Activated B cell treated with CpG ODN at 0.5 μM for 24 hours (primary cell): ENCODE measurements at regions of chr6 and their contacts with region 1.

Region 1: GRCh38 chr6:142857233-142857761 is 87.7 kb downstream of the HIVEP2 start:
- DNase-seq: no peak
- ATAC-seq: peak; percentile 26
- H3K4me3 Mint-ChIP-seq: peak overlapping the region; percentile 73
- H3K27ac Mint-ChIP-seq: peak overlapping the region; percentile 95
- H3K4me1 Mint-ChIP-seq: peaks cover 90% of the 10 kb centered on the region
- H3K27me3 Mint-ChIP-seq: no peaks in the 10 kb centered on the region
- CTCF ChIP-seq: no peak

Region 2: GRCh38 chr6:141077355-141078333 is 1779.7 kb before region 1 on chr6:
- CTCF ChIA-PET with region 1: no interaction called
- POLR2A ChIA-PET with region 1: no interaction called
- intact Hi-C with region 1: no loop called
- DNase-seq: no peak
- ATAC-seq: peak; percentile 42
- H3K4me3 Mint-ChIP-seq: no peak overlapping the region
- H3K27ac Mint-ChIP-seq: no peak overlapping the region
- H3K4me1 Mint-ChIP-seq: no peaks in the 10 kb centered on the region
- H3K27me3 Mint-ChIP-seq: no peaks in the 10 kb centered on the region
- CTCF ChIP-seq: no peak

Region 3: GRCh38 chr6:142871910-142872331 is 14.6 kb after region 1 on chr6:
- CTCF ChIA-PET with region 1: no interaction called
- POLR2A ChIA-PET with region 1: interaction called, 4 read pairs
- intact Hi-C with region 1: loop called (anchors 1 kb)
- DNase-seq: no peak
- ATAC-seq: peak; percentile 91
- H3K4me3 Mint-ChIP-seq: peak overlapping the region; percentile 49
- H3K27ac Mint-ChIP-seq: peak overlapping the region; percentile 82
- H3K4me1 Mint-ChIP-seq: peaks cover 84% of the 10 kb centered on the region
- H3K27me3 Mint-ChIP-seq: no peaks in the 10 kb centered on the region
- CTCF ChIP-seq: no peak